ENCODE measurements at regions of chr6 and their contacts with region 1.

Region 1: GRCh38 chr6:36180126-36180525 is 16.4 kb upstream of the BRPF3 start:
- DNase-seq: no peak
- H3K4me3 ChIP-seq: no peak overlapping the region
- H3K4me3 Mint-ChIP-seq: no peak overlapping the region
- H3K27ac ChIP-seq: no peak overlapping the region
- H3K27ac Mint-ChIP-seq: no peak overlapping the region
- H3K4me1 ChIP-seq: peaks cover 5 to 7% of the 10 kb centered on the region in 2 donors
- H3K4me1 Mint-ChIP-seq: peaks cover 6% of the 10 kb centered on the region
- H3K27me3 ChIP-seq: no peaks in the 10 kb centered on the region
- H3K27me3 Mint-ChIP-seq: peaks cover 1 to 3% (median 3%) of the 10 kb centered on the region in 3 donors
- CTCF ChIP-seq: no peak

Region 2: GRCh38 chr6:35757456-35758123 is 422.5 kb before region 1 on chr6:
- intact Hi-C with region 1: no loop called
- DNase-seq: no peak
- H3K4me3 ChIP-seq: no peak overlapping the region
- H3K4me3 Mint-ChIP-seq: no peak overlapping the region
- H3K27ac ChIP-seq: no peak overlapping the region
- H3K27ac Mint-ChIP-seq: no peak overlapping the region
- H3K4me1 ChIP-seq: peaks cover 0 to 5% of the 10 kb centered on the region in 2 donors
- H3K4me1 Mint-ChIP-seq: peaks cover 12% of the 10 kb centered on the region
- H3K27me3 ChIP-seq: no peaks in the 10 kb centered on the region
- H3K27me3 Mint-ChIP-seq: peaks cover 10 to 24% (median 15%) of the 10 kb centered on the region in 3 donors
- CTCF ChIP-seq: peak; percentile 10

Region 3: DNA sequence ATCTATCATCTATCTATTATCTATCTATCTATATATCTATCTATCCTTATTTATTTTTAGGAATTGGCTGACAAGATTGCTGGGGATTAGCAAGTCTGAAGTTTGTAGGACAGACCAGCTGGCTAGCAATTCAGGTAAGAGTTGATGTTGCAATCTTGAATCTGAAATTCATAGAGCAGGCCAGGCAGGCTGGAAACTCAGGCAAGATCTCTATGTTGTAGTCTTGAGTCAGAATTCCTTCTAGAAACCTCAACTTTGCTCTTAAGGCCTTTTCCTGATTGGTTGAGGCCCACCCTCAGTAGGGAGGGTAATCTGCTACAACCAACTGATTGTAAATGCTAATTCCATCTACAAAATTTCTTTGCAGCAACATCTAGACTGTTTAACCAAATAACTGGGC is 30.6 kb before region 1 on chr6:
- intact Hi-C with region 1: loop called in 1 of 2 experiments (anchors 5 kb)
- DNase-seq: no peak
- H3K4me3 ChIP-seq: no peak overlapping the region
- H3K4me3 Mint-ChIP-seq: no peak overlapping the region
- H3K27ac ChIP-seq: no peak overlapping the region
- H3K27ac Mint-ChIP-seq: no peak overlapping the region
- H3K4me1 ChIP-seq: peaks cover 31 to 36% of the 10 kb centered on the region in 2 donors
- H3K4me1 Mint-ChIP-seq: peaks cover 39% of the 10 kb centered on the region
- H3K27me3 ChIP-seq: no peaks in the 10 kb centered on the region
- H3K27me3 Mint-ChIP-seq: peaks cover 2 to 8% (median 5%) of the 10 kb centered on the region in 3 donors
- CTCF ChIP-seq: no peak

Measured in CD14-positive monocyte (primary cell).